Heart right ventricle (tissue), 16 donors: ENCODE measurements at regions of chr9 and their contacts with region 1.

Region 1: DNA sequence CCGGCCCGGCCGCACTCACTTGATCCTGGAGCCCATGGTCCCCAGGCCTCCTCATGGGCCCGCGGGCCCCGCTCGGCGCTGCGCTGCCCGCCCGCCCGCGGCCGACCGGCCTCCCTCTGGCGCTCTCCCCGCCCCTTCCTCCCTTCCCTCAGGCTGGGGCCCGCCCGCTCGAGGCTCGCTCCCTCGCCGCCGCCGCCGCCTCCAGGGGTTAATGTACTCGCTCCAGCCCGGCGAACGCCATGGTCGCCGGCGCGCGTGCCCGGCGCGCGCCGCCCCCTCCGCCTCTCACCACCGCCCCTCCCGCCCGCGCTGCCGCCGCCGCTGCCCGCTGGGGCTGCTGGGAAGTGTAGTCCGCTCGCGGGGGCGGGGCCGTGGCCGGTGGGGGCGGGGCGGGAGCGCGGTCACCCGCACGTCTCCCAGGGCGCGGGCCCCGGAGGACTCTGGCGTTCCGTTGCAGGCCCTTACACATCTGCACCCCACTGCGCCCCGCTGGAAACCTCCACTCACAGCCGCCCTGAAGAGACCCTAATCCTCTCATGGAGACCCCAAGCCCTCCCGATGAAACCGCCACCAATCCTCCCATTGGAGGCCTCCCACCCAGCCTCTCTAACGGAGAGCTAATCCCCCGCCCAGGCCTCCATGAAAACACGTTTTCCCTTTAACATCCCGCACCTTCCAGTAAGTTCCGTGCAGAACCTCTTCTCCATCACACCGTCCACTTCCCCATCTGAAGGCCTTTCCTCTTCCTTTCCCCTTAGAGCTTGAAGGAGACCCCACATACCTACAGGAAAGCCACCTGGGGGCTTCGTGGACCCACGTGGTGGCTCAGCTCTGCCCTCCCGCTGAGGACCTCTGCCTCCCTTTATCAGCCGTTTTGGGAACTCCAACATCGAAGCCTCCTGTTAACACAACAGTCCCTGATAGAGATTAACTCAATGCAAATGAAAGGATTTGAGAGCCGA is at the start of gene DENND1A:
- DNase-seq: peak; percentile 90 to 95
- ATAC-seq: peak; percentile 93 to 98 (median 96)
- H3K4me3 ChIP-seq: peak within 1 kb of the TSS; percentile 63 to 94 (median 70)
- H3K27ac ChIP-seq: peak within 1 kb of the TSS; percentile 21 to 80 (median 73)
- H3K4me1 ChIP-seq: peaks cover 0 to 43% (median 28%) of the 10 kb centered on the region in 9 donors
- H3K27me3 ChIP-seq: no peaks in the 10 kb centered on the region
- CTCF ChIP-seq: no peak
- total RNA-seq, gene DENND1A: 11.2 to 19.6 (median 12.6) TPM

Region 2: GRCh38 chr9:123749580-123750202 is 180.5 kb before region 1 on chr9:
- intact Hi-C with region 1: loop called in 3 of 10 experiments (anchors 5 to 10 kb)
- DNase-seq: no peak
- ATAC-seq: peak in 1 of 8 donors; percentile 47
- H3K4me3 ChIP-seq: no peak overlapping the region
- H3K27ac ChIP-seq: no peak overlapping the region
- H3K4me1 ChIP-seq: peaks cover 0 to 17% (median 0%) of the 10 kb centered on the region in 9 donors
- H3K27me3 ChIP-seq: no peaks in the 10 kb centered on the region
- CTCF ChIP-seq: no peak

Region 3: GRCh38 chr9:123769719-123770118 is 160.4 kb before region 1 on chr9:
- intact Hi-C with region 1: no loop called
- DNase-seq: no peak
- ATAC-seq: no peak
- H3K4me3 ChIP-seq: no peak overlapping the region
- H3K27ac ChIP-seq: no peak overlapping the region
- H3K4me1 ChIP-seq: peaks cover 0 to 25% (median 0%) of the 10 kb centered on the region in 9 donors
- H3K27me3 ChIP-seq: no peaks in the 10 kb centered on the region
- CTCF ChIP-seq: no peak

Region 4: DNA sequence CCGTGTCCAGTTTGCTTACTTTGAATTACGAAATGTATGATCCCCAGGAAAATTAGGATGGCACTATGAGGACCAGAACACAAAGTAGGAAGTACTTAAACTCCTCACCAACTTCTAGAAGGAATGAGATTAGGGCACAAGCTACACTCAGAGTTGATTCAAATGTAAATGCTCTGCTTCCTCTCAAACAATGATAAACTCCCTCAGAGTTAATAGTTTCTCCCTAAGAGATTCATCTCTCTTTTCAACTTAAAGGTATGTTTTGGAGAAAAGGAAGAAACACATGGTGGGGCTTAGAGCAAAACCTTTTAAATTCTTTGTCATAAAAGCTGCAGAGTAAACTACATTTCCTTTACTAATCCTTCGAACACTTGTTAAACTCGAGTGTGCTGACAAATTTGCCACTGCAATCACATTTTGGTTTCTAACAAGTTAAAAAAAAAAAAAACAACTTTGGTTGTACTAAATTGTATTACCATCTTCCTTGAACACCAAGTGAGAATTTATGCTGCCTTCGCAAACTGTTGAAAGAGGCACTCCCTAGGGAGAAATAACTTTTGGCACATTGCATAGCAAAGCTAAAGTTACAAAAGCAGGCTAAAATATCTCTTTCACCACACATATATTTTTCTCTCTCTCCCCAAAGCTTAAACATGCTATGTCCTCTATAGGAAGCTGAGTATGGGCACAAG is 66.8 kb before region 1 on chr9:
- intact Hi-C with region 1: loop called in 2 of 10 experiments (anchors 5 to 10 kb)
- DNase-seq: no peak
- ATAC-seq: peak in 1 of 8 donors; percentile 48
- H3K4me3 ChIP-seq: no peak overlapping the region
- H3K27ac ChIP-seq: peak overlapping the region in 1 of 10 donors; percentile 41
- H3K4me1 ChIP-seq: peaks cover 0 to 69% (median 32%) of the 10 kb centered on the region in 9 donors
- H3K27me3 ChIP-seq: no peaks in the 10 kb centered on the region
- CTCF ChIP-seq: no peak

Region 5: GRCh38 chr9:124126571-124127289 is 196.6 kb after region 1 on chr9:
- intact Hi-C with region 1: no loop called
- DNase-seq: peak; percentile 54 to 75
- ATAC-seq: peak in 7 of 8 donors; percentile 48 to 71 (median 59)
- H3K4me3 ChIP-seq: no peak overlapping the region
- H3K27ac ChIP-seq: no peak overlapping the region
- H3K4me1 ChIP-seq: peaks cover 0 to 4% (median 0%) of the 10 kb centered on the region in 9 donors
- H3K27me3 ChIP-seq: peaks cover 0 to 19% (median 14%) of the 10 kb centered on the region in 7 donors
- CTCF ChIP-seq: peak; percentile 93 to 99 (median 98)